K562 (cell line): ENCODE measurements at regions of chr1 and their contacts with region 1.

Region 1: DNA sequence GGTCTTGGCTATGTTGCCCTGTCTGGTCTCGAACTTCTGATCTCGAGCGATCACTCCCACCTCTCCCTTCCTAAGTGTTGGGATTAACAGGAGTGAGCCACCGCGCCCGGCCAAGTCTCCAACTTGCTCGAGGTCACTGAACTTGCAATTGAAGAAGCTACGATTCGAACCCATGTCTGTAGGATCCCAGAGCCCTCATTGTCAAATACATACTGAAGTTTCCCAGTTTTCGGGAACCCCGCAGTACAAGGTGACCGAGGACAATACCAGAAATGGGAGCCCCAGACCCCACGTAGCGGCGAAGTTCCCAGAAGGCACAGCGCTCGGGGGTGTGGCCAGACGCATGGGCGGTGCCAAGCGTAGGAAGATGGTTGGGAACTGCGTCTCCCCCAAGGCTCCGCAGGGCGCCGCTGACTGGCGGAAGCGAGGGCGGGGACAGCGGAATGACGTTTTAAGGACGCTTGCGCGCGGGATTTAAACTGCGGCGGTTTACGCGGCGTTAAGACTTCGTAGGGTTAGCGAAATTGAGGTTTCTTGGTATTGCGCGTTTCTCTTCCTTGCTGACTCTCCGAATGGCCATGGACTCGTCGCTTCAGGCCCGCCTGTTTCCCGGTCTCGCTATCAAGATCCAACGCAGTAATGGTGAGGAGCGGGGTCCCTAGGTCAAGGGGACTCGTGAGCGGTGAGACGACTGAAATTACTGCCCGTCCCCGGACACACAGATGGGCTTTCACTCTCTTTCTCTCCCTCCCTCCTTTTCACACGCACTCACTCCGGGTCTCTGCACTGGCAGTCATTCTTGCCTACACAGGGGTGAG is at the start of gene KIF2C:
- DNase-seq: peak; percentile 97 to 100 (median 98)
- ATAC-seq: peak; percentile 98
- H3K4me3 ChIP-seq: peak within 1 kb of the TSS; percentile 68
- H3K27ac ChIP-seq: peak within 1 kb of the TSS; percentile 95
- H3K4me1 ChIP-seq: peaks cover 13 to 22% of the 10 kb centered on the region in 2 experiments; a peak in 4 of 5 replicates
- H3K27me3 ChIP-seq: no peaks in the 10 kb centered on the region
- CTCF ChIP-seq: peak in 2 of 3 experiments; percentile 15 to 25; a peak in 3 of 6 replicates
- EP300 ChIP-seq: peak; percentile 54
- POLR2A ChIP-seq: peak; percentile 98
- RAD21 ChIP-seq: no peak
- polyA plus RNA-seq, gene KIF2C: 84.9 to 161 TPM

Region 2: GRCh38 chr1:44757420-44757819 is 17.9 kb after region 1 on chr1:
- CTCF ChIA-PET with region 1: interaction called, 6 read pairs
- POLR2A ChIA-PET with region 1: interaction called, 199 read pairs
- in situ Hi-C with region 1: no loop called
- intact Hi-C with region 1: no loop called
- DNase-seq: no peak
- ATAC-seq: no peak
- H3K4me3 ChIP-seq: no peak overlapping the region
- H3K27ac ChIP-seq: no peak overlapping the region
- H3K4me1 ChIP-seq: no peaks in the 10 kb centered on the region
- H3K27me3 ChIP-seq: no peaks in the 10 kb centered on the region
- CTCF ChIP-seq: no peak
- EP300 ChIP-seq: no peak
- POLR2A ChIP-seq: no peak
- RAD21 ChIP-seq: no peak

Region 3: GRCh38 chr1:45134468-45134873 is 394.9 kb after region 1 on chr1:
- CTCF ChIA-PET with region 1: no interaction called
- POLR2A ChIA-PET with region 1: no interaction called
- in situ Hi-C with region 1: no loop called
- intact Hi-C with region 1: no loop called
- DNase-seq: no peak
- ATAC-seq: no peak
- H3K4me3 ChIP-seq: no peak overlapping the region
- H3K27ac ChIP-seq: no peak overlapping the region
- H3K4me1 ChIP-seq: no peaks in the 10 kb centered on the region
- H3K27me3 ChIP-seq: peaks cover 5 to 9% of the 10 kb centered on the region in 2 experiments; a peak in 4 of 5 replicates
- CTCF ChIP-seq: no peak
- EP300 ChIP-seq: no peak
- POLR2A ChIP-seq: no peak
- RAD21 ChIP-seq: no peak

Region 4: DNA sequence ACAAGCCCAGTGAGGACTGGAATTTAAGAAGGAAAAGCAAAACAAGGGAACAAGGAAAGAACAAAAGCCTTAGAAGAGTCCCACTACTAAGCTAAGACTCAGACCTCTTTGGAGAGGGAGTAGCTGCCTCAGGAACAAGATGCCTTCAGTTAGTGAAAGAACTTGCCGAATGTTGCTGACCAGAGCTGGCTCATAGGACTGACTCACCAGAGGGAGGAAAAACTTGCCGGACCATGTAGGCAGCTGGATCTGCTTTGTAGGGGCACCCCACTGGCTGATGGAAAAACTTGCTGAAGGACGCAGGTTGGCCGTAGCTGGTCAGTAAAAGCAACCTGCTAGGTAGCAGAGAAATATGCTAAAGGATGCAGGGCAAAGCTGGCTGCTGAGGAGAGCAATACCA is 482.1 kb after region 1 on chr1:
- CTCF ChIA-PET with region 1: no interaction called
- POLR2A ChIA-PET with region 1: no interaction called
- in situ Hi-C with region 1: no loop called
- intact Hi-C with region 1: no loop called
- DNase-seq: no peak
- ATAC-seq: no peak; the same call in 1 of the 3 replicates
- H3K4me3 ChIP-seq: no peak overlapping the region
- H3K27ac ChIP-seq: no peak overlapping the region
- H3K4me1 ChIP-seq: no peaks in the 10 kb centered on the region
- H3K27me3 ChIP-seq: peaks cover 27 to 31% of the 10 kb centered on the region in 2 experiments
- CTCF ChIP-seq: no peak
- EP300 ChIP-seq: no peak
- POLR2A ChIP-seq: no peak
- RAD21 ChIP-seq: no peak